Caco-2 (cell line): ENCODE measurements at regions of chr20 and their contacts with region 1.

Region 1: DNA sequence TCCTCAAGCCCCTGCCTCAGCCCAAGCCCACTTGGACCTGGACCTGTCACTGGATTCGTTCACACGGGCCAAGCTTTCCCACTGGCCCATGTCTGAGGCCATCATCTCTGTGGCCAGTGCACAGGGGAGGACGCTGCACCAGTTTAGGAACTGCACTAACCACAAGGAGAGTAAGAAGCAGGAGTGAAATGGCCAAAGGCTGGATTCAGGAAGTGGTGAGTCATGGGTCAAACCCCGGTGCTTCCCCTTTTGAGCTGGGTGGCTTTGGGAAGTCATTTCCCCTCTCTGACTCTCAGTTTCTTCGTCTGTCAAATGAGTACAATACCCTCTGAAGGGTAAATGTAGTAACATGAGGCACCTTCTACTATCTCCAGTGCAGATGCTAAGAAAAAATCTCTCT is 87.9 kb downstream of the CD40 start:
- DNase-seq: no peak
- H3K4me3 ChIP-seq: no peak overlapping the region
- H3K4me3 Mint-ChIP-seq: no peak overlapping the region
- H3K27ac Mint-ChIP-seq: no peak overlapping the region
- H3K4me1 ChIP-seq: no peaks in the 10 kb centered on the region; the same call in 1 of the 2 replicates
- H3K4me1 Mint-ChIP-seq: no peaks in the 10 kb centered on the region
- H3K27me3 ChIP-seq: peaks cover 4% of the 10 kb centered on the region; the same call in 1 of the 2 replicates
- H3K27me3 Mint-ChIP-seq: peaks cover 46% of the 10 kb centered on the region
- CTCF ChIP-seq: no peak

Region 2: GRCh38 chr20:46282669-46283068 is 76.6 kb after region 1 on chr20:
- CTCF ChIA-PET with region 1: no interaction called
- POLR2A ChIA-PET with region 1: no interaction called
- intact Hi-C with region 1: no loop called
- DNase-seq: no peak
- H3K4me3 ChIP-seq: no peak overlapping the region
- H3K4me3 Mint-ChIP-seq: no peak overlapping the region
- H3K27ac Mint-ChIP-seq: no peak overlapping the region
- H3K4me1 ChIP-seq: no peaks in the 10 kb centered on the region
- H3K4me1 Mint-ChIP-seq: no peaks in the 10 kb centered on the region
- H3K27me3 ChIP-seq: peaks cover 5% of the 10 kb centered on the region
- H3K27me3 Mint-ChIP-seq: peaks cover 36% of the 10 kb centered on the region
- CTCF ChIP-seq: no peak

Region 3: DNA sequence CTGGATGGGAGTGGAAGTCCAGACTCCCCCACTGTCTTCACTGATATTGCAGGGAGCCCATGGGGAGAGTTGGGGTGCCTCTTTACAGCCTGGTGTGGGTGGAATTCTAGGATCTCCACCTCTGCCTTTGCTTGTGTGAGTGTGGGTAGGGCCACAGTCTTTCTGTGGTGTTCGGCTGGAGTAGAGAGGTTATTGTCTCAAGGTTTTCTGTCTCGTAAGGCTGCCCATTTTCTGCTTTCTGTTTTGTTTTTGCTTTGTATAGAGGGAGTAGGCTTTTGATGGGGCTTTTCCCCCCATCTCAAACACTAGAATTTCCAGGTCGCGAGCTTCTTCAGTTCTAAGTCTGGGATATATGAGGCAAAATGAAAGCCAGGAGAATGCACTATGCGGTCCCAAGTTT is 240.8 kb after region 1 on chr20:
- CTCF ChIA-PET with region 1: no interaction called
- POLR2A ChIA-PET with region 1: interaction called, 11 read pairs
- intact Hi-C with region 1: no loop called
- DNase-seq: no peak
- H3K4me3 ChIP-seq: no peak overlapping the region
- H3K4me3 Mint-ChIP-seq: no peak overlapping the region
- H3K27ac Mint-ChIP-seq: no peak overlapping the region
- H3K4me1 ChIP-seq: no peaks in the 10 kb centered on the region
- H3K4me1 Mint-ChIP-seq: no peaks in the 10 kb centered on the region
- H3K27me3 ChIP-seq: peaks cover 2% of the 10 kb centered on the region; the same call in 1 of the 2 replicates
- H3K27me3 Mint-ChIP-seq: peaks cover 34% of the 10 kb centered on the region
- CTCF ChIP-seq: no peak

Region 4: DNA sequence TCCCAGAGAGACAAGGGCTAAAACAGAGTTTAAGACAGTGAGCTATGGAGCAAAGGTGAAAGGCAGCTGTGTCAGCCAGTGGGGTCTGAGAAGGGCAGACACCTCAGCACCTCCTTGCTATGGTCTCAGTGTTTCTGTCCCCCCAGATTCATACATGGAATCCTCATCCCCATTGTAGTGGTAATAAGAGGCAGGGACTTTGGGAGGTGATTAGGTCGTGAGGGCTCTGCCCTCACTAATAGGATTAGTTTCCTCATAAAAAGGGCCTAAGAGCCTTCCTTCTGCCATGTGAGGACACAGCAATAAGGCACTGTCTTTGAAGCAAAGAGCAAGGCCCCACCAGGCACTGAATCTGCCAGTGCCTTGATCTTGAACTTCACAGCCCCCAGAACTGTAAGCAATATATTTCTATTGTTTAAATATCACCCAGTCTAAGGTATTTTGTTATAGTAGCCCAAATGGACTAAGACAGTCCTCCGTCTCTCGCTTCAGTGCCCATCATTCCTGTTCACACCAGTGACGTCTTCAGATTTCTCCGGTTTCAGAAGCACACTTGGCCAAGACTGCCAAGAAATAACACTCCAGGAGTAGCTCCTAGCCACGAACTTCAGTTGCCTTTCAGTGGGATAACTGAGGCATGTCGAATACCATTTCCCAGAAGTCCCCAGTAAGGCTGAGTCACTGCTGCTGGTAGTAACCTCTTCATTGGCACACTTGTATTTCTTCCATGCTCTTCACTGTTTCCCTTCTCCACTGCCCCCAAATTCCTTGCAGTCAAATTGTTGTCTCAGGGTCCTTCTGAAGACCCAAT is 412.5 kb after region 1 on chr20:
- CTCF ChIA-PET with region 1: no interaction called
- POLR2A ChIA-PET with region 1: no interaction called
- intact Hi-C with region 1: no loop called
- DNase-seq: no peak
- H3K4me3 ChIP-seq: no peak overlapping the region
- H3K4me3 Mint-ChIP-seq: no peak overlapping the region
- H3K27ac Mint-ChIP-seq: no peak overlapping the region
- H3K4me1 ChIP-seq: no peaks in the 10 kb centered on the region
- H3K4me1 Mint-ChIP-seq: no peaks in the 10 kb centered on the region
- H3K27me3 ChIP-seq: no peaks in the 10 kb centered on the region
- H3K27me3 Mint-ChIP-seq: peaks cover 12% of the 10 kb centered on the region
- CTCF ChIP-seq: no peak